Activated naive CD4-positive, alpha-beta T cell treated with anti-CD3 and anti-CD28 coated beads for 36 hours (primary cell): ENCODE measurements at regions of chr19 and their contacts with region 1.

Region 1: GRCh38 chr19:5904352-5905113 is at the start of gene VMAC:
- DNase-seq: peak; percentile 100
- H3K4me3 Mint-ChIP-seq: peak within 1 kb of the TSS; percentile 94
- H3K27ac Mint-ChIP-seq: peak within 1 kb of the TSS; percentile 99
- H3K4me1 Mint-ChIP-seq: peaks cover 37% of the 10 kb centered on the region
- H3K27me3 Mint-ChIP-seq: no peaks in the 10 kb centered on the region
- total RNA-seq, gene VMAC: 1.5 to 2.0 TPM

Region 2: GRCh38 chr19:5680437-5681368 is 223.8 kb before region 1 on chr19 and contains the starts of genes HSD11B1L and MICOS13:
- CTCF ChIA-PET with region 1: no interaction called
- intact Hi-C with region 1: loop called (anchors 2 kb)
- DNase-seq: peak; percentile 99
- H3K4me3 Mint-ChIP-seq: peak within 1 kb of the TSS; percentile 98
- H3K27ac Mint-ChIP-seq: peak within 1 kb of the TSS; percentile 91
- H3K4me1 Mint-ChIP-seq: peaks cover 20% of the 10 kb centered on the region
- H3K27me3 Mint-ChIP-seq: no peaks in the 10 kb centered on the region
- total RNA-seq, gene HSD11B1L: 2.6 to 3.0 TPM
- total RNA-seq, gene MICOS13: 43.3 to 44.8 TPM

Region 3: GRCh38 chr19:5691822-5692722 is 212.5 kb before region 1 on chr19:
- CTCF ChIA-PET with region 1: no interaction called
- intact Hi-C with region 1: no loop called
- DNase-seq: no peak
- H3K4me3 Mint-ChIP-seq: peak overlapping the region; percentile 98
- H3K27ac Mint-ChIP-seq: peak overlapping the region; percentile 96
- H3K4me1 Mint-ChIP-seq: peaks cover 19% of the 10 kb centered on the region
- H3K27me3 Mint-ChIP-seq: no peaks in the 10 kb centered on the region

Region 4: DNA sequence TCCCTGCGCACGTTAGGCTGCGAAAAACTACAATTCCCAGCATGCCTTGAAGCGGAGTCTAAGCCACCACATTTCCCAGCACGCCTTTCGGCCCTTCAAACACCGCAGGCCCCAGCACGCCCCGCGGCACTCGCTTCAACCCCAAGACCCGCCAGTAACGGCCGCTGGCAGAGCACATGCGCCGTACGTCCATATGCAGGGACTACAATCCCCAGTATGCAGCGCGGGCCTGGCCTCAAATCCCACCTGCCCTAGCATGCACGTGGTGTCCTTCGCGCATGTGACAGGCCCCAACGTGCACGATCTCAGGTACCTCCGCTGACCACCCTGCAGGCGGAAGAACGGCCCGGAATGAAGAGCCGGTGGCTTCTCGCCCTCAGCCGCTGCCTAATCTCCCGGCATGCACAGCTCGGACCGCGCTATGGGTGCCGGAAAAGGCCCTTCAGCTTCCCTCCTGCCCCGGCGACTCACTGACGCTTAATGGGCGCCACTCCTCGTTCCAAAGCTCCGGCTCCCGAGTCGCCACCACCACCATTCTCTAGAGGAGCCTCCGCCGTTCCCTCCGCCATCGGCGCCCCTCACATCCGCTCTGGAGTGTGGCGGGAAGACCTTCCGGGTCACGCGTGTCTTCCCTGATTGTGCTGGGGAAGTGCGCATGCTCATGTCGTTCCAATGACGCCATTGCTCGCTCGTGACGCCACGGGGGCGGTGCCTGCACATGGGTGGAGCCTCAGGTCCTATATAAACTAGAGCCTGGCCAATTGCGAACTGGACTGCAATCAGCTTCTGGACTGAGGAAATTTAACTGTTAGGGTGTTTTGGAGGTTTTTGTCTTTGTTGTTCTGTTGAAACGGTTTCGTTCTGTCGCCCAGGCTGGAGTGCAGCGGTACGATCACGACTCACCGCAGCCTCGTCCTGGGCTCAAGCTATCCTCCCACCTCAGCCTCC is 113.7 kb before region 1 on chr19 and contains the start of gene DUS3L:
- CTCF ChIA-PET with region 1: no interaction called
- intact Hi-C with region 1: loop called (anchors 1 kb)
- DNase-seq: peak; percentile 98
- H3K4me3 Mint-ChIP-seq: peak within 1 kb of the TSS; percentile 100
- H3K27ac Mint-ChIP-seq: peak within 1 kb of the TSS; percentile 100
- H3K4me1 Mint-ChIP-seq: peaks cover 13% of the 10 kb centered on the region
- H3K27me3 Mint-ChIP-seq: no peaks in the 10 kb centered on the region
- total RNA-seq, gene DUS3L: 43.1 to 45.2 TPM

Region 5: GRCh38 chr19:5827891-5828660 is 76.5 kb before region 1 on chr19:
- CTCF ChIA-PET with region 1: interaction called, 6 read pairs
- intact Hi-C with region 1: loop called (anchors 1 kb)
- DNase-seq: peak; percentile 96
- H3K4me3 Mint-ChIP-seq: peak overlapping the region; percentile 99
- H3K27ac Mint-ChIP-seq: peak overlapping the region; percentile 96
- H3K4me1 Mint-ChIP-seq: peaks cover 9% of the 10 kb centered on the region
- H3K27me3 Mint-ChIP-seq: no peaks in the 10 kb centered on the region

Region 6: DNA sequence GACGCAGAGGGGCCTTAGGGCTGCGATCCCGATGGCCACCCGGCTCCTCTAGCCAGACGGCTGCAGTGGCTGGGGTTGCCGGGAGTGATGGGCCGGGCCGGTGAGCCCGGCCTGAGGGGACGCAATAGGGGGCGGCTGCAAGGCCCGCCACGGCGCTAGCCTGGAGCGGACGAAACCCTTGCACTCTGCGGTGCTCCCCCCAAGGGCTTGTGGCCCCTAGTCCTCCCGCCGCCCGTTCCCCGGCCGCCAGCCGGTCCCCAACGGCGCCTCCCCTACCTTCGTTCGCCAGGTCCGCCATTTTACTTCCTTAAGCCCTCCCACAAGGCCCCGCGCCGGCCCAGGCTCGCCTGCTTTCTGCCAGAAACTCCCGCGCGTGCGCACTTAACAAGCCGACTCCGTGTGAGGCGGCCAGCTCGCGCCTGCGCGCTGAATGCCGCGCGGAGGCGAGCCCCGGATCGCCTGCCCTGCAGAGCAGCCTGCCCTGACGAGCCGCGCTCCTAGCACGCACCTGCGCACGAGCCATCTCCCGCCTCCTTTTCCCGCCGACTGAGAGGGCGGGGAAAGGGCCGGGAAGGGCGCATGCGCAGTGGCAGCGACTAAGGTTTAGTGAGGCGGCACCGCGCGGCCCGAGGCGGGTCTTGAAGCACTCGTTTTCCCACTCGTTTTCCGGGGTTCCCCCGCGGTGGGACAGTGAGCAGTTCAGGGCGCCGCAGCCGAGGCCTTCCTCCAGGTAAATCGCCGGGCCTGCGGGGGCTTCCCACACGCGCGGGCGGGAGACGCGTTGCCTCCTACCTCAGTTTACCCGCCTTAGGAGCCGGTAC is 73.5 kb after region 1 on chr19 and contains the start of gene RANBP3:
- CTCF ChIA-PET with region 1: interaction called, 4 read pairs
- intact Hi-C with region 1: loop called (anchors 1 kb)
- DNase-seq: peak; percentile 98
- H3K4me3 Mint-ChIP-seq: peak within 1 kb of the TSS; percentile 98
- H3K27ac Mint-ChIP-seq: peak within 1 kb of the TSS; percentile 95
- H3K4me1 Mint-ChIP-seq: peaks cover 59% of the 10 kb centered on the region
- H3K27me3 Mint-ChIP-seq: no peaks in the 10 kb centered on the region
- total RNA-seq, gene RANBP3: 77.9 to 80.5 TPM

Region 7: DNA sequence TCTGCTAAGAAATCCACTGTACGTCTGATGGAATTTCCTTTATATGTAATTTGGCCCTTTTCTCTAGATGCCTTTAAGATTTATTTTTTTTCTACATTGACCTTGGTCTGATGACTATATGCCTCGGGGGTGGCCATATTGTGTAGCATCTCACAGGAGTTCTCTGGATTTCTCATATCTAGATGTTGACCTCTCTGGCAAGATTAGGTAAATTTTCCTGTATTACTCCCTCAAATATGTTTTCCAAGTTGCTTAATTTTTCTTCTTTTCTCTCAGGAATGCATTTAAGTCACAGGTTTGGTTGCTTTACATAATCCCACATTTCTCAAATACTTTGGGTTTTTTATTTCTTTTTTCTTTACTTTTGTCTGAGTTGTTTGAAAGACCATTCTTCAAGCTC is 267.0 kb after region 1 on chr19:
- CTCF ChIA-PET with region 1: no interaction called
- intact Hi-C with region 1: no loop called
- DNase-seq: no peak
- H3K4me3 Mint-ChIP-seq: no peak overlapping the region
- H3K27ac Mint-ChIP-seq: no peak overlapping the region
- H3K4me1 Mint-ChIP-seq: no peaks in the 10 kb centered on the region
- H3K27me3 Mint-ChIP-seq: no peaks in the 10 kb centered on the region

Region 8: GRCh38 chr19:6372594-6373095 is 468.1 kb after region 1 on chr19 and contains the start of gene ALKBH7:
- CTCF ChIA-PET with region 1: no interaction called
- intact Hi-C with region 1: loop called (anchors 1 kb)
- DNase-seq: peak; percentile 99
- H3K4me3 Mint-ChIP-seq: peak within 1 kb of the TSS; percentile 89
- H3K27ac Mint-ChIP-seq: peak within 1 kb of the TSS; percentile 94
- H3K4me1 Mint-ChIP-seq: peaks cover 18% of the 10 kb centered on the region
- H3K27me3 Mint-ChIP-seq: no peaks in the 10 kb centered on the region
- total RNA-seq, gene ALKBH7: 39.5 to 42.4 TPM

Region 9: DNA sequence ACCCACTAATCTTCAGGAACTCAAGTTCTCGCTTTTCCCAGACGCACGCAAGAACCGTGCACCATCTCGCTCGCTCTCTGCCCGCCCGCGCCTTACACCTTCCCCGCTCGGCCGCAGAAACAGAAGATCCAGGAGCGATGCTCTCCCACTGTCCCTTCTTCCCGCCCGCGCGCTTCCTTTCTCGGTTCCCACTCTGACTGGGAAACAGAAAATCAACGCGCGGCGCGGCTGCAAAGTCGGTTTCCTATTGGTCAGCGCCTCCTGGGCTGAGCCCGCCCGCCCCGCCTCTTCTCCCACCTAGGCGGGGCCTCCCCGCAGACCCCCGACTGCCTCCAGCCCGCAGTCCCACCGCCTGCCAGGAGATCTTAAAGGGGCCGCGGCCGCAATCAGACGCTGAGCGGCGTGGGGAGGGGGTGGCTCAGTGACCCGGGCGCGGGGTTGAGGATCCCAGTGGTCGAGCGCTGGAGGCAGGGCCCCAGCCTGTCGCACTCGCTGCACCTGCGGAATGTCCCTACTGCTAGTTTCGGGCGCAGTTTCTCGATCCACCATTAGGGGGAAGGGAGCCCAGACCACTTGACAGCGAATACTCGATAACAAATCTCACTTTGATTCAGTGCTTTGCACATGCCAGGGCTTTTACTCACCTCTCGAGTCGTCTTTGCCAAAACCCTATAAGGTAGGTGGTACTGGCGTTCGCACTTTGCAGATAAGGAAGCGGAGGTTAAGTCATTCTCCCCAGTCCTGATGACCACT is 555.7 kb after region 1 on chr19:
- CTCF ChIA-PET with region 1: no interaction called
- intact Hi-C with region 1: loop called (anchors 1 kb)
- DNase-seq: peak; percentile 98
- H3K4me3 Mint-ChIP-seq: peak overlapping the region; percentile 90
- H3K27ac Mint-ChIP-seq: peak overlapping the region; percentile 78
- H3K4me1 Mint-ChIP-seq: peaks cover 22% of the 10 kb centered on the region
- H3K27me3 Mint-ChIP-seq: no peaks in the 10 kb centered on the region